ENCODE measurements at regions of chr7 and their contacts with region 1.

Region 1: GRCh38 chr7:55255496-55256435 is 109.4 kb upstream of the LANCL2 start:
- DNase-seq: peak; percentile 85
- ATAC-seq: peak; percentile 84
- H3K4me3 ChIP-seq: peak overlapping the region; percentile 72
- H3K27ac ChIP-seq: peak overlapping the region; percentile 47
- H3K4me1 ChIP-seq: peaks cover 9% of the 10 kb centered on the region; the same call in 1 of the 2 replicates
- H3K27me3 ChIP-seq: no peaks in the 10 kb centered on the region
- CTCF ChIP-seq: peak; percentile 90

Region 2: GRCh38 chr7:54773472-54774399 is 482.0 kb before region 1 on chr7:
- CTCF ChIA-PET with region 1: interaction called, 24 read pairs
- POLR2A ChIA-PET with region 1: interaction called, 3 read pairs
- intact Hi-C with region 1: loop called (anchors 1 kb)
- DNase-seq: peak; percentile 94
- ATAC-seq: peak; percentile 88
- H3K4me3 ChIP-seq: peak overlapping the region; percentile 67
- H3K27ac ChIP-seq: peak overlapping the region; percentile 54
- H3K4me1 ChIP-seq: peaks cover 21% of the 10 kb centered on the region
- H3K27me3 ChIP-seq: no peaks in the 10 kb centered on the region
- CTCF ChIP-seq: peak; percentile 86

Region 3: DNA sequence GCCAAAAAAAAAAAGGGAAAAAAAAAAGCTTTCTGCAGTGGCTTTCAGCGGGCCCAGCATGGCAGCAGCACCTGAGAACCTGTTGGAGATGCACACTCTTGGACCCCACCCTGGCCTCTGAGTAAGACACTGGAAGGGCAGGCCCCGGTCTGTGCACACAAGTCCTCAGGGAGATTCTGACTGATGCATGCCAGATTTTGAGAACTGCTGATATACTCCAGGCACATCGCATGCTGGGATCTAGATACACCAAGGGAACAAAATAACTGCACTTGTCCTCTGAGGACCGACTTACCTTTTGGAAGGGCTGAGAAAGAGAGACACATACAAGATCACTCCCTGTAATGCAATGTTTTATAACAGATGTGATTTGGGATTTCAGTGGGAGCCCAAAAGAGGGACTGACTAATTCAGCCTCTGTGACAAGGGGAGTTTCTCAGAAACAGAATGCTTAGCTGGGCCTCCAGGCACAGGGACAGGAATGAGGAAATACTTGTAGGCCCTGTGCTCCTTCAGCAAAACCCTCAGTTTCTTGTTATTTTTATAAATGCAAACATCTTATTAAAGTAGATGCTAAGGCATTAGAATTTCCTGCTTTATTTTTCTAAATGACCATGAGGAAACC is 228.8 kb before region 1 on chr7:
- CTCF ChIA-PET with region 1: interaction called, 3 read pairs
- POLR2A ChIA-PET with region 1: no interaction called
- intact Hi-C with region 1: loop called (anchors 5 kb)
- DNase-seq: no peak
- ATAC-seq: peak; percentile 25; the same call in 1 of the 2 replicates
- H3K4me3 ChIP-seq: no peak overlapping the region
- H3K27ac ChIP-seq: 0 out of 2 replicates have a peak overlapping the region, but pooled peaks have one; percentile 2
- H3K4me1 ChIP-seq: peaks cover 53% of the 10 kb centered on the region
- H3K27me3 ChIP-seq: no peaks in the 10 kb centered on the region
- CTCF ChIP-seq: no peak

Region 4: DNA sequence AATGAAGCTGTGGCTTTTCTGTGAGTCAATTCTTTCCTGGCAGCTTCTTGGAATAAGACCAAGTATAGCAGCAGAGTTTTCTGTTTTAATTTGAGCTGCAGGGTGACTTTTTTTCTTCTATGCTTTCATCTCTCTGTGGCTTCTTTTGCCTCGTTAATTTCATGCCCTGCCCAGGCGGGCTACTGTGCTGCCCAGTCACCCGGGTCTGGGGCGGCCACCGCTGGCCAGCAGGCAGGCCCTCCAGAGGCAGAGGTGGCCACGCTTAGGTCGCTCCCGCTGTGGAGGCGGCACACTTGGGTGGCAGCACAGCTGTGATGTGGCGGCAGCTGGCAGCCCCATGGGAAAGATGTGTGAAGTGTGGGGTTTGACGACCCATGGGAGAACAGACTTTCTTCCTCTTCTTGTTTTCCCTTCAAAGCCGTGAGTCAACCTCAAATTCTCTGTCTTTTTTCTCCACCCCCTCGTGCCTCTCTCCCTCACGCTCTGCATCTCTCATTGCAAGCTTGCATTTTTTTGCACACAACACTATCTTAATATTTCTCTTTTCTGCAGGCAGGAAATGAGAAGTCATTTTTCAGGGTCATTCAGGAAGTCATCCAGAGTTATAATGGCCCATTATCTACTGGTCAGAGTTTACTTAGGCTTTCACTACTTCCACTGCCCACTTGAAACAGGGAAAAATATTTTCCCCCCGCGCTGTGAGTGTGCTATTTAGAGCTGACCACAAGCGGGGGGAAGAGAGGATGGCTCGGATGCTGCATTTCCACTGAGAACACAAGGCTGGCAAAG is 169.2 kb before region 1 on chr7:
- CTCF ChIA-PET with region 1: interaction called, 4 read pairs
- POLR2A ChIA-PET with region 1: no interaction called
- intact Hi-C with region 1: loop called (anchors 5 kb)
- DNase-seq: peak; percentile 78
- ATAC-seq: peak; percentile 84
- H3K4me3 ChIP-seq: peak overlapping the region; percentile 63
- H3K27ac ChIP-seq: peak overlapping the region; percentile 99
- H3K4me1 ChIP-seq: peaks cover 44% of the 10 kb centered on the region
- H3K27me3 ChIP-seq: no peaks in the 10 kb centered on the region
- CTCF ChIP-seq: no peak